ENCODE measurements at regions of chr1 and their contacts with region 1.

Region 1: DNA sequence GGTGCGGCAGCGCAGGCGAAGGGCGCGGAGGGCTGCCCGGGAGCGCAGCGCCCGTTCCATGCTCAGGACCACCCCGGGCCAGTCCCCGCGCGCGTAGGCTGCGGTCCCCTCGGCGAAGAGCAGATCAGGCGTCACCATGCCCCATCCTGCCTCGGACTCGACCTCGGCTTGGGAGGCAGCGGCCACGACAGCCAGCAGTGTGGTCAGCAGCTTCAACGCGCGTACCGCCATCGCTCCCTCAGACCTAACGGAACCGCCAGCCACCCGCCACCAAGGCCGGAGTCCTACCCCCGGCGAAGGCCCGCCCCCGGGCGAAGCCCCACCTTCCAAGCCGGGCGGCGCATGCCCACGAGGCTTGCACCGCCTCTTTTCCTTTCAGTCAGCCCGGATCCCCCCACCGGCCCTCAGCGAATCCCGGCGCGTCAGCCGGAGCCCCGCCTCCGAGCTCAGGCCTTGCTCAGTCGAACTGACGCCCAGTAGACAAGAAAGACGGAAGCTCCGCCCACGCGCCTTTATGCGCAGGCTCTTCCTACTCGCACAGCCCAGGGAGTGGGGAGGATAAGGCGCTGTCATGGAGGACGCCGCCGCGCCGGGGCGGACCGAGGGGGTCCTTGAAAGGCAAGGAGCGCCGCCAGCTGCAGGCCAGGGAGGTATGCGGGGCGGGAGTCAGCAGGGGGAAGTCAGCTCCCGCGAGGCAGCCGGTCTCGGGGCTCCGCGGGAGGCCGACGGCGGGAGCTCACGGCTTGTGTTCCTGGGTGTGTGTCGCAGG is at the starts of genes C1orf50 and P3H1:
- DNase-seq: peak; percentile 100
- ATAC-seq: peak; percentile 92
- H3K4me3 ChIP-seq: peak within 1 kb of the TSS; percentile 71 to 92 (median 76)
- H3K4me3 Mint-ChIP-seq: no peak within 1 kb of the TSS
- H3K27ac ChIP-seq: peak within 1 kb of the TSS; percentile 53 to 83
- H3K27ac Mint-ChIP-seq: peak within 1 kb of the TSS; percentile 98
- H3K4me1 ChIP-seq: peaks cover 27 to 31% of the 10 kb centered on the region in 2 donors
- H3K4me1 Mint-ChIP-seq: peaks cover 24% of the 10 kb centered on the region
- H3K27me3 ChIP-seq: no peaks in the 10 kb centered on the region
- H3K27me3 Mint-ChIP-seq: no peaks in the 10 kb centered on the region
- CTCF ChIP-seq: no peak
- total RNA-seq, gene C1orf50: 13.1 and 17.1 TPM in 2 replicates
- total RNA-seq, gene P3H1: 42.2 and 46.1 TPM in 2 replicates

Region 2: GRCh38 chr1:42335050-42335808 is 431.7 kb before region 1 on chr1 and contains the start of gene FOXJ3:
- CTCF ChIA-PET with region 1: no interaction called
- POLR2A ChIA-PET with region 1: no interaction called
- intact Hi-C with region 1: loop called (anchors 1 kb)
- DNase-seq: peak; percentile 97
- ATAC-seq: peak; percentile 90
- H3K4me3 ChIP-seq: peak within 1 kb of the TSS; percentile 63 to 97 (median 89)
- H3K4me3 Mint-ChIP-seq: peak within 1 kb of the TSS; percentile 95
- H3K27ac ChIP-seq: peak within 1 kb of the TSS; percentile 75 to 91
- H3K27ac Mint-ChIP-seq: peak within 1 kb of the TSS; percentile 90
- H3K4me1 ChIP-seq: peaks cover 20 to 24% of the 10 kb centered on the region in 2 donors
- H3K4me1 Mint-ChIP-seq: peaks cover 44% of the 10 kb centered on the region
- H3K27me3 ChIP-seq: no peaks in the 10 kb centered on the region
- H3K27me3 Mint-ChIP-seq: no peaks in the 10 kb centered on the region
- CTCF ChIP-seq: no peak
- total RNA-seq, gene FOXJ3: 76.4 and 80.3 TPM in 2 replicates

Region 3: DNA sequence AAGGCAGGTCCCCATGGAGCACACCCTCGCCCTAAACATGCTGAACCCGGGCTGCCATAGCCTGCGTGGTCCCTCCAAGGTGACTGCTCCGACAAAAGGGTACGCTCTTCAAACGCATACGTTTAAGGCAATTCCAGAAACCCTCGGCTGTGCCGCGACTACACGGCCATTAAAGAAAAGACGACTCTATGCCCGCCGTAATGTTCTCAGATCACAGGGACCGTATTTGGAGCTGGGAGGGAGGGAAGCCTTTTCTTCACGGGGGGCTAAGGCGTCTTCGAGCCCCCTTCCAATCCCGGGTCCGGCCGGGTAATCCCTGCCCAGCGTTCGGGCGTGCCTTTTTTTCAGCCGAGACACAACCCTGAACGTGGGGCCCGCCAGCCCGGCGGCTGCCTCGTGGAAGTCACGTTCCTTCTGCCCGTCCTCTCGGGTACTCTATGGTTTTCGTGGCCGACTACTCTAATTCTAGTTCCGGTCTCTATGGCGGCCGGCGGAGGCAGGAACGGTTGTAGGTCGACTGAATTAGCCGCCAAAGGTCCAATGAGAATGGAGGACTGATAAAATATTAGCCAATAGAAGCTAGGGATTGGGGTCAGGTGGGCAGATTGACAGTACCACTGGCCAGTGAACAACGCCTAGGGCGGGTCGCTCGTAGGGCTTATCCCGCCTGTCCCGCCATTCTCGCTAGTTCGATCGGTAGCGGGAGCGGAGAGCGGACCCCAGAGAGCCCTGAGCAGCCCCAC is 85.0 kb before region 1 on chr1 and contains the start of gene YBX1:
- CTCF ChIA-PET with region 1: interaction called, 15 read pairs
- POLR2A ChIA-PET with region 1: interaction called, 22 read pairs
- intact Hi-C with region 1: loop called (anchors 1 kb)
- DNase-seq: peak; percentile 98
- ATAC-seq: peak; percentile 86
- H3K4me3 ChIP-seq: peak within 1 kb of the TSS; percentile 64 to 94 (median 82)
- H3K4me3 Mint-ChIP-seq: peak within 1 kb of the TSS; percentile 99
- H3K27ac ChIP-seq: peak within 1 kb of the TSS; percentile 80 to 97
- H3K27ac Mint-ChIP-seq: peak within 1 kb of the TSS; percentile 100
- H3K4me1 ChIP-seq: peaks cover 48 to 50% of the 10 kb centered on the region in 2 donors
- H3K4me1 Mint-ChIP-seq: peaks cover 54% of the 10 kb centered on the region
- H3K27me3 ChIP-seq: no peaks in the 10 kb centered on the region
- H3K27me3 Mint-ChIP-seq: no peaks in the 10 kb centered on the region
- CTCF ChIP-seq: no peak
- total RNA-seq, gene YBX1: 314 and 345 TPM in 2 replicates

Region 4: DNA sequence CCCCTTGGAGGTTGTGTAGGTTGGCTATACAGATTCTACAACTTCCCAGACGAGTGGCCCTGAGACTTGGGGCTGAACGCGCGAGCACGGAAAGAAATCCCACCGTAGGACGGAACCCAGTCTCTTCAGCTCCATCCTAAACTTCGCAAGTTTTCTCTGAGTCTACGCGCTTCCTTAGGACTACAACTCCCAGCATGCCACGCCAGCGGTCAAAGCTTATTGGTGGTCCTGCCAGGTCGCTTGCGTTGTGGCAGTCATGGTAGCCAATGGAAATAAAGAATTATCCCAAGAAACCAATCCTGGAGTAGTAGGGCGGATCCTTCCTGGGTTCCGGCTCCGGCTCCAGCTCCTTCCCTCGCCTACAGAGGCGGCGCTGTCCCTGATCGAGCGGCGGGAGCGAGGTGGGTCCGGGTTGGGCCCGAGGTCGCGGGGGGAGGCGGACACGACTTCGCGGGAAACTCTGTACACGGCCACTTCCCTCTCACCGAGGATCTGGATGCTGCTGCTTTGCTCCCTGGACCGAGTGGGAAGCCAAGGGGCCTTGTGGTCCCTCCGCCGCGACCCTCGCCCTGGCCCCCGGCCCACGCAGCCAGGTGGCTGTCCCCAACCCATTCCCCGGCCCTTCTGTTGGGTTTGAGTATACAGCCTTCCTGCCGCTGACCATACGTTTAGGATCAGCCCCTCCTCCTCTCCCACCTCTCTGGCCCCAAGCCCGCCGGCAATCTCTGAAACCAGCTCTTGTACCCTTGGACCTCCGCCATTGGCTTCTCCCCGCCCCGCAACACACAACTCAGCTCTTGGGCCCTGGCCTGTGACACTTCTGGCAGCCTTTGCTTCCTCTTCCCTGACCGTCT is 79.6 kb after region 1 on chr1 and contains the start of gene ZNF691:
- CTCF ChIA-PET with region 1: interaction called, 12 read pairs
- POLR2A ChIA-PET with region 1: no interaction called
- intact Hi-C with region 1: loop called (anchors 1 kb)
- DNase-seq: peak; percentile 93
- ATAC-seq: peak; percentile 98
- H3K4me3 ChIP-seq: peak within 1 kb of the TSS; percentile 80 to 92 (median 90)
- H3K4me3 Mint-ChIP-seq: peak within 1 kb of the TSS; percentile 95
- H3K27ac ChIP-seq: peak within 1 kb of the TSS; percentile 41 to 76
- H3K27ac Mint-ChIP-seq: peak within 1 kb of the TSS; percentile 91
- H3K4me1 ChIP-seq: peaks cover 17 to 24% of the 10 kb centered on the region in 2 donors
- H3K4me1 Mint-ChIP-seq: peaks cover 46% of the 10 kb centered on the region
- H3K27me3 ChIP-seq: no peaks in the 10 kb centered on the region
- H3K27me3 Mint-ChIP-seq: no peaks in the 10 kb centered on the region
- CTCF ChIP-seq: peak; percentile 16
- total RNA-seq, gene ZNF691: 17.1 and 18.4 TPM in 2 replicates

Region 5: DNA sequence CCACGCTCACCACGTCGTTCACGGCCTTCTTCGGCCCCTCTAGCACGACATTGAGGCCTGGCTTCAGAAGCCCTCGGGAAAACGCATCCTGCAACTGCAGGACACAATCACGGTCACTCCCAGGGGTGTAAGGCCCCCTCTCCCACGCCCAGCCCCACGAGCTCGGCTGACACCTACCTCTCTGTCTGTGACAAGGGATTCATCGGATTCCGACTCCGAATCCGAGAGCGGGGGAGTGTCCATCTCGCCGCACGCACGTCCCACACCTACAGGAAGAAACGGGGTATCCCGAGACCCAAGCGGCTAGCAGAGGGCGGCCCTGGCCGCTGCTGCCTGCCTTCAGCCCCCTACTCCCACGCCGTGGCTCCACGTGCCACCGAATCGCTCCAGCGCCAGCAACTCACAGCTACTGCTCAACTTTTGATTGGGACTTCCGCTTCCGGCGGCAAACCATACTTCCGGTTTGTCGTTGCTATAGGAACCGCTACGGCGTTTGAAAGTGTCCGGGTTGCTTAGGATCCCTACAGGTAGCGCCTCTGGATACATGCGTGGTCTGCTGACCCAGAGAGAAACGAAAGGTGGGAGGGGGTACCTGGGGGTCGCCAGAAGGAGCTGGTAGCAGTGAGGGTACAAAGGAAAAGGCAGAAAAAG is 405.1 kb after region 1 on chr1 and contains the starts of genes CFAP57 and EBNA1BP2:
- CTCF ChIA-PET with region 1: no interaction called
- POLR2A ChIA-PET with region 1: no interaction called
- intact Hi-C with region 1: loop called (anchors 2 kb)
- DNase-seq: peak; percentile 97
- ATAC-seq: peak; percentile 73
- H3K4me3 ChIP-seq: peak within 1 kb of the TSS; percentile 75 to 96 (median 82)
- H3K4me3 Mint-ChIP-seq: peak within 1 kb of the TSS; percentile 96
- H3K27ac ChIP-seq: peak within 1 kb of the TSS; percentile 31 to 72
- H3K27ac Mint-ChIP-seq: peak within 1 kb of the TSS; percentile 93
- H3K4me1 ChIP-seq: peaks cover 7 to 12% of the 10 kb centered on the region in 2 donors
- H3K4me1 Mint-ChIP-seq: peaks cover 27% of the 10 kb centered on the region
- H3K27me3 ChIP-seq: peaks cover 0 to 18% (median 13%) of the 10 kb centered on the region in 4 experiments
- H3K27me3 Mint-ChIP-seq: peaks cover 20% of the 10 kb centered on the region
- CTCF ChIP-seq: no peak
- total RNA-seq, gene CFAP57: 0.15 and 0.44 TPM in 2 replicates
- total RNA-seq, gene EBNA1BP2: 25.9 and 27.4 TPM in 2 replicates

Region 6: GRCh38 chr1:44029906-44030604 is 1263.1 kb after region 1 on chr1:
- CTCF ChIA-PET with region 1: no interaction called
- POLR2A ChIA-PET with region 1: no interaction called
- intact Hi-C with region 1: loop called (anchors 5 kb)
- DNase-seq: peak; percentile 94
- ATAC-seq: peak; percentile 80
- H3K4me3 ChIP-seq: peak overlapping the region; percentile 17 to 87 (median 81)
- H3K4me3 Mint-ChIP-seq: peak overlapping the region; percentile 98
- H3K27ac ChIP-seq: peak overlapping the region; percentile 71 to 72
- H3K27ac Mint-ChIP-seq: peak overlapping the region; percentile 96
- H3K4me1 ChIP-seq: peaks cover 10 to 31% of the 10 kb centered on the region in 2 donors
- H3K4me1 Mint-ChIP-seq: peaks cover 37% of the 10 kb centered on the region
- H3K27me3 ChIP-seq: peaks cover 0 to 4% (median 0%) of the 10 kb centered on the region in 4 experiments
- H3K27me3 Mint-ChIP-seq: no peaks in the 10 kb centered on the region
- CTCF ChIP-seq: no peak

Measured in B cell (primary cell).